GM13977 (cell line): ENCODE measurements at regions of chr9 and their contacts with region 1.

Region 1: DNA sequence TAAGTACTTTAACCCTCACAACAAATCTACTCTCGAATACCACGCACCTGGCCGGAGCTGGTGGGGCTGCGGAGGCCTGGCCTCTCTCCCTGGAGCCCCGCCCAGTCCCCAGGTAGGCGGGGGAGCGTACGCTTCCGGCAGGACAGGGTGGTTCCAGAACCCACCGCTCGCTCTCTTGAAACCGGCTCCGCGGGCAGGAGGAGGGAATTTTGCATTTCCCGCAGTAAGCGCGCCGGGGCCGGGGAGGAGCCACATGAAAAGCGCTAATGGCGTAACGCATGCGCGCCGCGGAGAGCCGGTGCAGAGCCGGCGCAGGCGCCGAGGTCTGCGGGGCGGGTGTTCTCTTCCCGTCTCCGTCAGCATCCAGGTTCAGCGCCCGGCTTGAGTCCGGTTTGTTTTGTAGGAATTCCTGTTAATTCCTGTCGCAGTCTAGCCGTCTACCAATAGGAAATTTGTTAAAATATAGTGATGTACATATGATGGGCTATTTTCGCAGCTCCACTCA is 20.8 kb downstream of the CAVIN4 start:
- DNase-seq: peak; percentile 61
- CTCF ChIP-seq: no peak

Region 2: DNA sequence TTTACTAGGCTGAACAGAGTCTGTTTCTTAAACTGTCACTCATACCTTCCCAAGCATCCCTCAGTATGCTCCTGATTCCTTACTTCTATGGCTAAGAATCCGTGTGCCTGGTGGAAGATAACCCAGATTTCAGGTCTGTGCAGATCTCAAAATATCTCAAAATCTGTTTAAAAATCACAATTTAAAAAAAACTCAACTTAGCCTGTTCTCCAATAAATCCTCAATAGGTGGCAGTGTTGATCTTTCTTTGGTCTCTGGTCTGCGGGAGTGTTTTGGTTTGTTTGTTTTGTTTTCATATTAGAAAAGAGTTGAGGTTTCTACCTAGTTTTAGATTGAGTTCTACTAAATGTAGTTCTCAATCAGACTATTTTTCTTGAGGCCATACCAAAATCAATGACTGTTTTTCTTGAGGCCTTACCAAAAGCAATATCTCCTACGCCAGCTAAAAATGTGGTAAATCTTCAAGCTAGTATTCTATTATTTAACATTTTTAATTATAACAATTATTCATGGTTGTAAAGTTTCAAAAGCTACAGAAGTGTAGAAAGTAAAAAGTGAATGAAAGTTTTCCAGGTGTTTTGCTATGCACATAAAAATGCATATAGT is 1435.8 kb before region 1 on chr9:
- in situ Hi-C with region 1: loop called (anchors 25 kb)
- DNase-seq: peak; percentile 52
- CTCF ChIP-seq: peak; percentile 60

Region 3: DNA sequence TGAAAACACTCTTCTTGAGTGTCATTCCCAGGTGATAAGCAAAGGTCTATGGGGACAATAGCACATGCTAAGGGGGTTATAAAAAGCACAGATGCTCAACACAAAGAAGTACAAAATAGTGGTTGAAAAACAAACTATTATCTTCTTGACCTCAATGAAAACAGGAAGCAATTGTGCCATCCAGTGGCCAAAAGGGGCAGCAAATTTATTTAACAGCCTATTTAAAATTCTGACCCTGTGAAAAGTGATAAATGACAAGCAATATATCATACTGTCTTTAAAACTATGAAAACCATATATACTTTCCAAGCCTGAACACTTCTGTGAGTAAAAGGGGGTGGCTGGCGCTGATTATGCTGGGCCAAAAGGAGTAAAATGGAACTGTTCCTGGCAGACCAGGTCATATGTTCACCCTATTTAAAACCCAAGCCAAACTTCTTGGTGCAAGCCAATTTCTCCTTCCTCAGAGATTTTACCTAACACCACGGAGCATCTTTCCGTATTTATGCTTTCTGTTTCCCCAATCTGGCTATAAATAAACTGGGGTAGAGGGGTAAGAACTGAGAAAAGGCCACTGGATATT is 275.6 kb before region 1 on chr9:
- in situ Hi-C with region 1: loop called (anchors 25 kb)
- DNase-seq: peak; percentile 9
- CTCF ChIP-seq: peak; percentile 62